Posterior vena cava (tissue), 2 donors: ENCODE measurements at regions of chr9 and their contacts with region 1.

Region 1: GRCh38 chr9:114205171-114206015 is 50.1 kb downstream of the COL27A1 start:
- DNase-seq: no peak

Region 2: DNA sequence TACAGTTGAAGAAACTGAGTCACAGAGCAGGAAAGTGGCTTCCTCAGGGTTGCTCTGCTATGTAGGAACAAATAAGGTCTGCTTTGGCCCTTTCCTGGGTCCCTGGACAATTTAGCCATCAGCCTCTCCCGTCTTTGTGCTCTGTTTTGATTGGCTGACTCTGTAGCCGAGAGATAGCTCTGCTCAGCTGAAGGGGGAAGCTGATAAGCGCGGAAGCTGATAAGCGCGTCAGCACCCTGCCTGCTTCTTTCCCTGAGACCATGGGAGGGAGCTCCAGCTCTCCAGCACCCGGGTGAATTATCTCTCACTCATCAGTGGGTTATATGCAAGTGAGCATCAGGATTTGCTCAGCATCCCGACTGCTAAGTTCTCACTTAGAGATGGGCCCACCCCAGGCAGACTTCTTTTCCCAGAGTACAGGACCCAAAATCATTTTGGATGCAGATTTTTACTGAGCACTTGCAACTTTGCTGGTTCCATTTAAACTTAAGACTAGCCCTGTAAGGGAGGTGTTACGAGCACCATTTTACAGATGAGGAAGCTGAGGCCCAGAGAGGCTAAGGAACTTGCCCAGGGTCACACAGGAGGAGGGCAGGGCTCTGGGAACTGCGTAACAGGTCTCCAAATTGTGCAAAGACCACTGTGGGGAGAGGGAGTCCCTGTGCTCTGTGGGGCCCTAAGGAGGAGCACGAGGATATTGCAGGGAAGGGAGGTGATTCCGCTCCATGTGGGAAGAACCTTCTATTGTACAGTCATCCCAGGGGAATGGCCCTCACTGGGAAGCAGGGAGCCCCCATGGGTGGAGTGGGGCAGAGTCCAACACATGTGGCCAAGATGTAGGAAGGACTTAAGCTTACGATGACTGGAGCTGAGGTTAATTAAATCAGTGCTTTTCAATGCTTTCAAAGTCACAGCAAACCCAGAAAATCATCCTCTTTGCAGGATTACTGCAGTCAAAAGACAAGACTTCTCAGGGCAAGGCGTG is 33.8 kb after region 1 on chr9:
- intact Hi-C with region 1: loop called in 1 of 2 experiments (anchors 1 kb)
- DNase-seq: no peak